HAP-1 (cell line): ENCODE measurements at regions of chr16 and their contacts with region 1.

Region 1: DNA sequence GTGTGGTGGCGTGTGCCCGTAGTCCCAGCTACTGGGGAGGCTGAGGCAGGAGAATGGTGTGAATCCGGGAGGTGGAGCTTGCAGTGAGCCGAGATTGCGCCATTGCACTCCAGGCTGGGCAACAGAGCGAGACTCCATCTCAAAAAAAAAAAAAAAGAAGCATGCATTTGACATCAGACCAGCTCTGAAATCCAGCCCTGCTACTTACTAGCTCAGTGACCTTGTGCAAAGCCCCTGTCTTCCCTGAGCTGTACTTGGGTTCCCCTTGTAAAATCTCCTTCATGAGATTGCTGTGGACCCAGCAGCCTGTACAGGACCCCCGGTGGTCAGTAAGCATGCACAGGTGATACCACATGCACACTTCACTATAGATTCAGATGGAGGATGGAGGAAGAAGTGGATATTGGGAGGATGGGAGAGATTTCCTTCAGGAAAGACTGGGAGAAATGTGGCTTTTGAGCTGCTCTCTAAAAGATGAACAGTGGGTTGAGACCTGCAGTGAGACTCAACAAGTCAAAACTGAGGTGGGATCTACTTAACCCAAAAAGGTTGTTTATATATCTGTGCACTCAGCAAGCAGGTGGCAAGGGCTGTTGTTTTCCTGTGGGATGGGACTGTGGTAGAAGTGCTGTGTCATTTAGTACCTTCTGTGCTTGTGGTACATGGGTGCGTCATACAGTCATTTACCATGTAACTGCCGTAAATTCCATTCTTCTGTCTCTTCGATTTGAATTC is 6.6 kb downstream of the HERPUD1 start:
- DNase-seq: no peak
- H3K4me3 ChIP-seq: no peak overlapping the region
- H3K4me1 ChIP-seq: peaks cover 14% of the 10 kb centered on the region
- H3K27me3 ChIP-seq: no peaks in the 10 kb centered on the region

Region 2: GRCh38 chr16:56866943-56867830 is 71.4 kb before region 1 on chr16:
- in situ Hi-C with region 1: loop called (anchors 5 kb)
- DNase-seq: peak; percentile 70 to 87
- H3K4me3 ChIP-seq: no peak overlapping the region
- H3K4me1 ChIP-seq: peaks cover 24% of the 10 kb centered on the region
- H3K27me3 ChIP-seq: no peaks in the 10 kb centered on the region